GM12878 (cell line): ENCODE measurements at regions of chr1 and their contacts with region 1.

Region 1: DNA sequence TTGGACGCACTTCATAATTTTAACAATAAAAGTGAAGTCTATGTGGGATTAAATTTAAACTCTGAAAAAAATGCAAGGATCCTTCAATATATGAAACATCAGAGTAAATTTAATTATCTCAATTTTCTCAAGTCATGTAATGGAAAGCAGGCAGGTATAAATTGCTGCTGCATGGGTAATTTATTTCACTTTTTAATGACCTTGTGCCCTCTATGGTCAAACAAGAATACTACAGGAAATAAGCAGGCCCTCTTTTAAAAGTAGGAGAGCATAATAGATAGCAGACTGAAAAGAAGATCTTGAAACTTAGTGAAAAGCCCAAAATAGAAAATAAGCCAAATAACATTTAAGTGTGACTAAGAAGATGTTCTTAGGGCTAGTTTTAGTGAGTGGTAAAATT is 22.9 kb downstream of the BCAS2 start:
- DNase-seq: no peak
- ATAC-seq: peak; percentile 88
- H3K4me3 ChIP-seq: no peak overlapping the region
- H3K27ac ChIP-seq: no peak overlapping the region
- H3K4me1 ChIP-seq: peaks cover 11% of the 10 kb centered on the region
- H3K27me3 ChIP-seq: no peaks in the 10 kb centered on the region
- CTCF ChIP-seq: peak; percentile 32 to 55 (median 39)
- EP300 ChIP-seq: no peak
- POLR2A ChIP-seq: no peak
- RAD21 ChIP-seq: peak; percentile 69

Region 2: DNA sequence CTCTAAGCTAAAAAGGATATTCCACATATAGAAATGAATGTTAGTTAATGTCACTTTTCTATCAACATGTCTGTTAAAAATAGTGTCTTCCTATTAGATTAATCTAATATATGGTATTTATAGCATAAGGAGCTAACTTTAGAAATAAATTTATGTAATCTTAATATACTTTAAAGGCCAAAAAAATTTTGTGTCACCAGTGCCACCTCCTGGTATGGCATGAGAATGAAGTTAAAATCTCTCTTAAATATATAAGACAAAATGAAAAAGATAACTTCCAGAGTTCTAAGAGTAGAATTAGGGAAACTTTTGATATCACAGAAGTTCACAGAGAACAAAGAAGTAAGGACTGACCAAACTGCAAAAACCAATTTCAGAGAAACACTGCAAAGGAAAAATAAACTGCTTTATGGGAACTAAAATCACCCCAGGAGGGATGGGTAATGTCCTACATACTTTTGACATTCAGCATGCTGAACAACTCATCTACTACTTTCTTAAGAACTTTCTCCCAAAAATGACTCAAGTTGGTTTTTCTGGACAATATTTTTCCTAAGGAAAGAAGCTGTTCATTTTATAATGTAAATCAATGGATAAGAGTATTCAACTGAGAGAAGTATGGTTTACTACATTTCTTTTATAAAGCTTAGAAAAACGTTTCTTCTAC is 130.3 kb before region 1 on chr1:
- CTCF ChIA-PET with region 1: interaction called, 10 read pairs
- POLR2A ChIA-PET with region 1: no interaction called
- RAD21 ChIA-PET with region 1: no interaction called
- SMC1A ChIA-PET with region 1: interaction called, 3 read pairs
- in situ Hi-C with region 1: no loop called
- intact Hi-C with region 1: no loop called
- DNase-seq: no peak
- ATAC-seq: no peak
- H3K4me3 ChIP-seq: no peak overlapping the region
- H3K27ac ChIP-seq: no peak overlapping the region
- H3K4me1 ChIP-seq: 0 out of 2 replicates have a peak, but pooled peaks cover 2% of the 10 kb centered on the region
- H3K27me3 ChIP-seq: no peaks in the 10 kb centered on the region
- CTCF ChIP-seq: peak in 2 of 3 experiments; percentile 23 to 34; a peak in 3 of 6 replicates
- EP300 ChIP-seq: no peak
- POLR2A ChIP-seq: no peak
- RAD21 ChIP-seq: peak; percentile 26; the same call in 1 of the 2 replicates

Region 3: DNA sequence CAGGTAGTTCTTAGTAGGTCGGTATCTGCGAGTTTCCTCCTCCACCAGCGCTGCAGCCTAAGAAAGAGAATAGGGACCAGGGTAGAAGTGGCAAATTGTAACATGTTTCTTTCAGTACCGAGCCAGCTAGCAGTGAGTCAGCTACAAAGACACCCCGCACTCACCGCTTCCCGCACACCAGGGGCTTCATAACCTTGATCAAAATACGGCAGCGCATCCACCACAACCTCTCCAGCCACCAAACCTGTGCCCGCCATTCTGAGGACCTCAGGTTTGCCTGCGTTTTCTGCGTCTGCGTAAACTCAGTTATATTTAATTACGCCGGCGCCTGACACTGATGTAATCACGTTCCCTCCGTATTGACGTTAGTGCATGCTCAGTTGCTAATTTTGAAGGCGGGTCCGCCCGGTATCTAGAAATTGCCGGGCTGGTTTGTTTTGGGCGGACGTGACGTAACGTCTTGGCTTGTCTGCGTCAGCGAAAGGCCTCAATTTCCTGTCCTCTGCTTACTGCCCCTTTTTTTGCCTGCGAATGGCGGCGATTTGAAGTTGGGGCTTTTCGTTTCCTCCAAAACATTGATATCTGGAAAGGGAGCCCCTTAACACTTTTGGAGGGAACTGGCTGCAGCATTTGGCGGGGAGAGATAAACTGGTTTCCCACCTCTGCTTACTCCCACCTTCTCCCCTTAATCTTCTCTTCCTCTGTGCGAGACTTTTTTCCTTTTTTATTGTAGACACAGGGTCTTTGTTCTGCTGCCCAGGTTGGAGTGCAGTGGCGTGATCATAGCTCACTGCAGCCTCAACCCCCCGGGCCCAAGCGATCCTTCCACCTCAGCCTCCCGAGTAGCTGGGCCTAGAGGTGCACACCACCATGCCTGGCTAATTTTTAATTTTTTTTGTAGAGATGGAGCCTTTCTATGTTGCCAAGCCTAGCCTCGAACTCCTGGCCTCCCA is 23.1 kb after region 1 on chr1 and contains the start of gene BCAS2:
- CTCF ChIA-PET with region 1: no interaction called
- POLR2A ChIA-PET with region 1: no interaction called
- RAD21 ChIA-PET with region 1: no interaction called
- SMC1A ChIA-PET with region 1: interaction called, 3 read pairs
- in situ Hi-C with region 1: no loop called
- intact Hi-C with region 1: loop called (anchors 2 kb)
- DNase-seq: peak; percentile 96
- ATAC-seq: peak; percentile 98
- H3K4me3 ChIP-seq: peak within 1 kb of the TSS; percentile 96
- H3K27ac ChIP-seq: peak within 1 kb of the TSS; percentile 71
- H3K4me1 ChIP-seq: peaks cover 6% of the 10 kb centered on the region; the same call in 1 of the 2 replicates
- H3K27me3 ChIP-seq: no peaks in the 10 kb centered on the region
- CTCF ChIP-seq: no peak
- EP300 ChIP-seq: no peak
- POLR2A ChIP-seq: peak; percentile 93
- RAD21 ChIP-seq: no peak
- polyA plus RNA-seq, gene BCAS2: 121 to 129 TPM